ENCODE measurements at regions of chr7 and their contacts with region 1.

Region 1: DNA sequence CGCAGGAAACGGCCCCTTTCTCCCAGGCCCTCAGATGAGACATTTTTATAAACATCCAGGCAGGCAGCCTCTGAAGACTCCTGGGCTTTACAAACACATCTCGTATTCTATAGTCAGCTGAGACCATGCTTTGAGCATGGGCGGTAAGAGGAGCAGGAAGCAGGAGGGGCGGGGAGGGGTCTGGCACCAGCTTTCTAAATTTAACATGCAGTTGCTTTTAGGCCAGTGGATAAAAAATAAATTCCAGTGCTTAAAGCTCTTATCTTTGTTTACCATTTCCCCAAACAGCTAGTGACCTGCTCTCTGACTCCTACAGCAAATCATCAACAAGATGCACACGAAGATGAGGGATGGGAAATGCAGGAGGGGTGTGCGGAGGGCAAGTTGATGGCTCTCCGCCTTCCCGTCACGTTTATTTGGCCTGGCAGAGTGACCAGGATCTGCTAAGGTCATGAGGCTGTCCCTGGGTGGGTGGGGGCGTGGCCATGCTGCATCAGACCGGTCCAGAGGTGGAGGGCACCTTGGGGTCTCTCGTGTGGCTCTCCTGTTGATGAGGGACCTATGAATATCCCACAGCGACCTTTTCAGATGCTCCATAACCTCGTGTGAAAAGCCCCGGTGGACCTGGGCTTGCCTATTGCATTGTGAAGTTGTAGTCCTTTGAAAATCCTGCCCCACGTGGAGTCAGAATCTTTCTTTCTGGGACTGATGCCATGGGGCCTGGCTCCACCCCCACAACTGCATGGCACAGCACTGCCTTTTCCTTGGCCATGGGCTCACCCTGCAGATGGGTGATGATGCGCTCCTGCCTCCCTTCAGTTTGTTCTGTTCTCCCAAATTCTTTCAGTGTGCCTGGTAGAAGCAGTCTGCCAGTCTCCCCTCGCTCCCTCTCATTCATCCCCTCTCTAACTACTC is 67.5 kb downstream of the PARP12 start:
- DNase-seq: peak in 2 of 3 donors; percentile 59 to 70
- ATAC-seq: peak; percentile 70 to 93 (median 82)
- H3K4me3 ChIP-seq: no peak overlapping the region
- H3K27ac ChIP-seq: no peak overlapping the region
- H3K4me1 ChIP-seq: no peaks in the 10 kb centered on the region
- H3K27me3 ChIP-seq: no peaks in the 10 kb centered on the region
- CTCF ChIP-seq: no peak
- POLR2A ChIP-seq: no peak

Region 2: GRCh38 chr7:139095194-139095659 is 900.0 kb before region 1 on chr7:
- intact Hi-C with region 1: no loop called
- DNase-seq: no peak
- ATAC-seq: peak; percentile 58 to 67 (median 62)
- H3K4me3 ChIP-seq: no peak overlapping the region
- H3K27ac ChIP-seq: no peak overlapping the region
- H3K4me1 ChIP-seq: peaks cover 0 to 8% (median 4%) of the 10 kb centered on the region in 4 donors
- H3K27me3 ChIP-seq: no peaks in the 10 kb centered on the region
- CTCF ChIP-seq: no peak
- POLR2A ChIP-seq: no peak

Region 3: GRCh38 chr7:139620676-139621344 is 374.5 kb before region 1 on chr7:
- intact Hi-C with region 1: loop called (anchors 10 kb)
- DNase-seq: no peak
- ATAC-seq: peak; percentile 35 to 65 (median 58)
- H3K4me3 ChIP-seq: no peak overlapping the region
- H3K27ac ChIP-seq: no peak overlapping the region
- H3K4me1 ChIP-seq: no peaks in the 10 kb centered on the region
- H3K27me3 ChIP-seq: no peaks in the 10 kb centered on the region
- CTCF ChIP-seq: peak; percentile 39 to 60 (median 48)
- POLR2A ChIP-seq: no peak

Region 4: GRCh38 chr7:139783647-139784385 is 211.5 kb before region 1 on chr7:
- intact Hi-C with region 1: loop called in 1 of 2 experiments (anchors 10 kb)
- DNase-seq: no peak
- ATAC-seq: no peak
- H3K4me3 ChIP-seq: no peak overlapping the region
- H3K27ac ChIP-seq: no peak overlapping the region
- H3K4me1 ChIP-seq: peaks cover 0 to 5% (median 0%) of the 10 kb centered on the region in 4 donors
- H3K27me3 ChIP-seq: no peaks in the 10 kb centered on the region
- CTCF ChIP-seq: no peak
- POLR2A ChIP-seq: no peak

Region 5: DNA sequence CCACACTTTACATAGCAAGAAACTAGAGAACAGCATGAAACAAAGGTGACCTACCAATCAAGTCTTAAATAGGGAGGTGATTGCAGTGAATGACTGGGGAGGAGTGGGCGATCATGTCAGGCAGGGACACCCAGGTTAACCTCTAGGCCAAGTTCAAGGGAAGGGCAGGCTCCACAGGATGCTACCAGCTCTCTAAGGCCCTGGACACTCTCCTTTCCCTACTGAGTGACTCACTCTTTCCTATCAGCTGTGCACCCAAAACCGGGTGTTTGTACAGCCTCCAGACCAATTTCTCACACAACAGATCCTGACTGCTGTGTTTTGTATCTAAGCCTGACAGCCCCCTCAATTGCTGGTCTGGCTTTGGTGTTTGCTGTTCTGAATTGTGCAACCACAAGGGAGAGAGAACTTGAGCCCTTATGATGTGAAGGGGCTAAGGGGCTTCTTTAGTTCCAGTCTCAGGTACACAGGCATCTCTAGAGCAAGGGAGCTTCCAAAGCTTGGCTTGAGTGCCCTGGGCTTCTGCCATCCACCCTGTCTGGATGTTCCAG is 58.4 kb before region 1 on chr7:
- intact Hi-C with region 1: no loop called
- DNase-seq: no peak
- ATAC-seq: peak in 3 of 4 donors; percentile 52 to 80 (median 66)
- H3K4me3 ChIP-seq: no peak overlapping the region
- H3K27ac ChIP-seq: no peak overlapping the region
- H3K4me1 ChIP-seq: no peaks in the 10 kb centered on the region
- H3K27me3 ChIP-seq: no peaks in the 10 kb centered on the region
- CTCF ChIP-seq: no peak
- POLR2A ChIP-seq: no peak